BJ (cell line): ENCODE measurements at regions of chr5 and their contacts with region 1.

Region 1: DNA sequence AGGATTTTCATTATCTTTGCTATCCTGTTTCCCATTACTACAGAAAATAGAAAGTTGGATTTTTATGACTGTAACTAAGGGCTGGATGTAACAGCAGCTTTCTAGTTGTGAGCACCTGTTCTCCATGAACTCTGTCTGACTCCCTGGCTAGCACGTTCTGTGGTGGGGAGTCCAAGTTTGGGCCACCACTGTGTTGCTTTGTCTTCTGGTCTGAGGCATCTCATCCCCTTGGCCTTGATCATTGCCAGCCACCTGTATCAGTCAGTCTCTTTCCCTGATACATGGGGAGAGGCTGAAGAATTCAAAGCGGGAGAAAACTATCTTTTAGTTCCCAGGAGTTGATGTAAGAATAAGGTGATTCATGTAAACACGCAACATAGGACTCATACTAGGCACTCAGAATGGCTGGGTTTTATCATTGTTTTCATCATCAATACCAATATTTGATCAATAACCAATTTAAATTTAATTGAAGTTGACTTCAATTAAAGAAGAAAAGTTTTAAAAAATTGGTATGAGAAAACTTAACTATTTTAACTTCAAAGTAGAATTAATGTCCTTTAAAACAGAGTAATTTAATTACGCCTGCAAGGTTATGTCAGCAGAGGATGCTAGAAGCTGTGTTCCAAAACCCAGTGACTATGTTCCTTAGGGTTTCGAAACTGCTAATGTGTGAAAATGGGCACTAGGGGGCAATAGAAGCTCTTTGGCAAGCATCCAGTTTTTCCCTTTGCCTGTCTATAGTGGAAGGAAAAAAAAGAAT is 33.6 kb downstream of the WDR70 start:
- DNase-seq: peak; percentile 37
- H3K4me3 ChIP-seq: no peak overlapping the region
- H3K27me3 ChIP-seq: no peaks in the 10 kb centered on the region
- CTCF ChIP-seq: peak; percentile 92

Region 2: DNA sequence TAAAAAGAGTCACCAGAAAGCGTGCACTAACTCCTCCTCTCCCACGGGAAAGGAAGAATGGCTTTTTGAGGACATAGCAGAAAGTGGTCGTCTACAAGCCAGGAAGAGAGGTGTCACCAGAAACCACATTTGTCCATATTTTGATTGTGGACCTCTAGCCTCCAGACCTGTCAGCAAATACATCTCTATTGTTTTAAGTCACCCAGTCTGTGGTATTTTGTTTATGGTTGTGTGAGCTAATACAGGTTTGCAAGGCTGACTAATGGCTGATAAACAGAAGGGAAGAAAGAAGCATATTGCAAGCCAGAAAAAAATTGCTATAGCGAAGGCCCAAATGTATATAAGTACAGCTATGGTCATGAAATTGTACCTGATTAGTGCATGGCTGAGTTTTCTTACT is 12.2 kb before region 1 on chr5:
- CTCF ChIA-PET with region 1: interaction called, 13 read pairs
- POLR2A ChIA-PET with region 1: no interaction called
- DNase-seq: no peak
- H3K4me3 ChIP-seq: no peak overlapping the region
- H3K27me3 ChIP-seq: no peaks in the 10 kb centered on the region
- CTCF ChIP-seq: no peak

Region 3: DNA sequence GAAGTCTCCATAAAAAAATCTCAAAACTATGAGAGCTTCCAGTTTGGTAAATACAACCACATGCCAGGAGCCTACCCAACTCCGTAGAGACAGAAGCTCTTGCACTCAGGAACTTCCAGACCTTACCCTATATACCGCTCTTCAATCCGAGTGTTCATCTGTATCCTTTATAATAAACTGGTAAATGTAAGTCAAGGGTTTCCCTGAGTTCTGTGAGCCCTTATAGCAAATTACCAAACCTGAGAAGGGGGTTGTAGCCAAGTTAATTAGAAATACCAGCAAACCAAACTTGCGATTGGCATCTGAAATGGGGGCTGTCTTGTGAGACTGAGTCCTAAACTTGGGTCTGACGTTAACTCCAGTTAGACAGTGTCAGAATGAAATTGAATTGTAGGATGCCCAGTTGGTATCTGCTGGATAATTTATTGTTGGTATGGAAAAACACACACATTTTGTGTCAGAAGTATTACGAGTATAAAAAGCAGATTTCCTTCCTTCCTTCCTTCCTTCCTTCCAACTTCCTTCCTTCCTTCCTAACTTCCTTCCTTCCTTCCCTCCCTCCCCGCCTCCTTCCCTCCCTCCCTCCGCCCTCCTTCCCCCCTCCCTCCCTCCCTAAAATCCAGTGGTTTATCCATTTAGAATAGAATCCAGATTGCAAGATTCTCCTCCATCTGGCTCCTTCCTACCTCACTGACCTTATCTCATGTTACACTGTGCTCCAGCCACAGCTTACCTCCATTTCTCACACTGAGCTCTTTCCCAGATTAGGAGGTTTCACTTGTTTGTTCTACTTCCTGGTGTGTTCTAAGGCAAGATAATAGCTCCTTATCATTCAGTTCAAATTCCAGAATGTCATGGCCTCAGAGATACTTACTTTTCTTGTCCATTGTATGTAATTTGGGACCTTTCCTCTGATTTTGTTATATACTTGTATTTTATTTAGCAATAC is 163.1 kb after region 1 on chr5:
- CTCF ChIA-PET with region 1: no interaction called
- POLR2A ChIA-PET with region 1: no interaction called
- DNase-seq: no peak
- H3K4me3 ChIP-seq: no peak overlapping the region
- H3K27me3 ChIP-seq: no peaks in the 10 kb centered on the region
- CTCF ChIP-seq: no peak

Region 4: DNA sequence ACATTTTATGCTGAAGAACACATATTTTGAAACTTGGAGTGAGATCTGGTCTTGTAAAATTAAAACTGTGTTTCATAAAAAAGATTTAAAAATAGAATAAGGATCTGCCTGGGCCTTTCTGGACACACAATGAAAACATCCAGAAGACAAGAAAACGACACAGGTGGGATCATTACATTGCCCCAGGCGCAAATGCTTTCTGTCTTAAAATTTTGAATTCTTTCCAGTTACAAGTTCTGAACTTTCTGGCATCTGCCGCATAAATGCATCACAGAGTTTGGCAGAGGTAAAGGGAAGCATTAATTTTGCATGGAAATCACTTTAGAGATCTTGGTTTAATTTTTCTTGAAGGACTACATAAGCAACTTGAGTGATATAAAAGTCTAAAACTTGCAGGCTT is 186.0 kb after region 1 on chr5:
- CTCF ChIA-PET with region 1: no interaction called
- POLR2A ChIA-PET with region 1: no interaction called
- DNase-seq: no peak
- H3K4me3 ChIP-seq: no peak overlapping the region
- H3K27me3 ChIP-seq: no peaks in the 10 kb centered on the region
- CTCF ChIP-seq: no peak

Region 5: DNA sequence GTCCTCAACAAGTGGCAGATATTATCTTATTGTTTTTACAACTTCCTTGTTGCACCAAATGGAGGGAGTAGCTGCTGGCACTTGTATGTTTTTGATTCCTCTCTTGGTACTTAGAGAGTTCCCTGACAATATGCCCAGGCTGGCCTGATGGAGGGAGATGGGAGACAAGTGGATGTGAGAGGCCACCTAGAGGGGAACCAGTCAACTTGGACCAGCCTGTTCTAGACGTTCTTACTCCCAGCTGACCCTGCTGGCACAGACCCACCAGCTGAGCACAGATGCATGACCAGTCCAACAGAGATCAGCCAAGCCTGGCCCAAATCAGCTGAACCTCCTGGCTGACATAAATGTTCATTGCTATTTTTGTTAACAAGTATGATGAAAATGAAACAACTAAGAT is 488.0 kb after region 1 on chr5:
- CTCF ChIA-PET with region 1: no interaction called
- POLR2A ChIA-PET with region 1: no interaction called
- DNase-seq: no peak
- H3K4me3 ChIP-seq: no peak overlapping the region
- H3K27me3 ChIP-seq: no peaks in the 10 kb centered on the region
- CTCF ChIP-seq: peak; percentile 32; the same call in 1 of the 2 replicates

Region 6: DNA sequence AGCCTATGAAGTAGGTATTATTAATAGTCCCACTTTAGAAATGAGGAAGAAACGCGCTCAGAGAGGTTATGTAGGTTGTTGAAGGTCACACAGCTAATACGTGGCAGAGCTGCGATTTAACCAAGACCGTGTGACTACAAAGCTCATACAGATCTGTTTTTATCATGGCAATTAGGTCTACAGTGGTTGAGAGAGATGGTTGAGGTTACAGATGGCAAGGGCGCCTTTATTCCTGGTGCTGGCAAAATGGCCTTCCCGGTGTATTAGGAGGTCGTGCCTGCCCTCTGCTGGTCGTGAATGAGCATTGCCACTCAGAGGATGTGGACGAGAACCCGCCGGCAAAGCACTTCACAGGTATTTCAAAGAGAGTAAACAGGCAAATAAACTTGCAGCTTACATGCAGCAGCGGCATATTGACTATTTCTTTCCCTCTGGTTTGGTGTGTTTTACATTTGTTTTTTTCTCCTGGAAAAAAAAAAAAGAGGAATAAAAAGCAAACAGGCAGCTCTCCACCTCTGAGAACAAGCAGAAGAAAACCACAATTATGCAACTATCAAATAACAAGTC is 780.4 kb after region 1 on chr5:
- CTCF ChIA-PET with region 1: interaction called, 34 read pairs
- POLR2A ChIA-PET with region 1: interaction called, 4 read pairs
- DNase-seq: no peak
- H3K4me3 ChIP-seq: no peak overlapping the region
- H3K27me3 ChIP-seq: peaks cover 5% of the 10 kb centered on the region
- CTCF ChIP-seq: peak; percentile 86